Thyroid gland (tissue), 4 donors: ENCODE measurements at regions of chr2 and their contacts with region 1.

Region 1: GRCh38 chr2:120343433-120344105 is 2.4 kb upstream of the INHBB start:
- DNase-seq: peak; percentile 89 to 93
- H3K4me3 ChIP-seq: peak overlapping the region in 1 of 3 donors; percentile 40
- H3K27ac ChIP-seq: peak overlapping the region in 2 of 3 donors; percentile 32 to 84
- H3K4me1 ChIP-seq: peaks cover 28 to 30% of the 10 kb centered on the region in 2 donors
- H3K27me3 ChIP-seq: no peaks in the 10 kb centered on the region
- CTCF ChIP-seq: peak; percentile 72 to 98 (median 88)
- POLR2A ChIP-seq: peak in 1 of 2 donors; percentile 45

Region 2: DNA sequence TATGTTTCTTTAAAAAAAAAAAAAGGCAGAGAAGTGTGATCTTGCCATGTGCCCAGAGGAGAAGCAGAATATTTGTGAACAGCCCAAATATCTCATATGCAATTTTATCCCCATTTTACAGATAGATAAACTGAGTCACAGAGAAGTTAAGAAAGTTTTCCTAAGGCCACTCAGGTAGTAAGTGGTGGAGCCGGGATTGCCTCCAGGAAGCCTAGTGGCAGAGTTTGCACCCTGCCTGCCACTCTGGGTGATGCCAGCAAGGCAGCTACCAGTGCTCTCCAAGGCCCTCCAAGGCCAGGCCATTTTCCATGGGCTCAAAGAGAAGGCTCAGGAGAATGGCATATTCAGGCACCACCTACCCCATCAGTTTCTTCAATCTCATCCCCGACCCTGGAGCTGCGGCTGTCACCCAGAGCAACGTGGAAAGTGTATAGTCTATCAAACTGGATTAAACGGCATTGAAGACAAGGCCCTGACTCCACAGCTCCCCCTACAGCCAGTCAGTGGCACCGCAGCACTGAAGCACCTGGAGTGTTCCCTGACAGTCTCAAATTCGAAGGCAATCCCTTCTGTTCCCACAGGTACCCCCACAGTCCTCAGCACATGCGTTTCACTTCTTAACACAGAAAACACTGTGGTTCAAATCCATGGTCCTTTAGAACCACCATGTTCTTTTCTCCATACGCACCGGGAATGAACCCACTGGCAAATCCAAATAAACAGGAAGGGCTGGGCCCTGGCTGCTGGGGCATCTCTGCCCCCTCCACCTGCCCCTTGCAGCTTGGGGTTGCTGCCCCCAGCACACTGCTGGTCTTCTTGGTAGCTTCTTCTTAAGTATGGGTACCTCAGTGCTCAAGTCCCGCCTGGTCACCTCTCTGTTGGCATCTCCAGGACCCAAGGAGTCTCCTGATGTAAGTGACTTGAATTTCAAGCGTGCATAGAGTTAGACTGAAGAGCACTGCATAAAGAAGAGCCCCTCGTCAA is 177.7 kb after region 1 on chr2:
- intact Hi-C with region 1: loop called (anchors 5 kb)
- DNase-seq: peak; percentile 52 to 66
- H3K4me3 ChIP-seq: no peak overlapping the region
- H3K27ac ChIP-seq: no peak overlapping the region
- H3K4me1 ChIP-seq: peaks cover 0 to 6% of the 10 kb centered on the region in 2 donors
- H3K27me3 ChIP-seq: no peaks in the 10 kb centered on the region
- CTCF ChIP-seq: peak; percentile 65 to 89 (median 79)
- POLR2A ChIP-seq: no peak